IMR-90 (cell line): ENCODE measurements at regions of chr7 and their contacts with region 1.

Region 1: DNA sequence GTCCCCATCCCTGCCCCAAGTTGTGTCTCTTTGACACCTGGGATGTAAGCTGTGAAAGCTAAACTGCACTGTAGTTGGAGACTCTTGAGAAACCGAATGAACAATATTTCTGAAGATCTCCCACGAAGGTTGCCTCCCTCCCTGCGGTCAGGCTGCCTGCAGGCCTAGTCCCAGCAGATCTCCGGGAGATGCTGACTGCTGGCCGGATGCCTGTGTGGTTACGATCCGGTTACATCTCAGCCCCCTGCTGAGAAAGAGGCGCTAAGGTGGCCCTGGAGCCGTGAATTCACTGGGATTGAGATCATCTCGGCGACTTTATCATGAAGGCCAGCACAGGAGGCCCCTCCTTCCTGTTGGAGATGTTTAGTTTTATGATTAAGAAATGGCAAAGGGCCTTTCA is 177.8 kb downstream of the PRKAG2 start:
- DNase-seq: peak; percentile 97
- ATAC-seq: peak; percentile 96
- H3K4me3 ChIP-seq: no peak overlapping the region
- H3K27ac ChIP-seq: no peak overlapping the region
- H3K4me1 ChIP-seq: peaks cover 12% of the 10 kb centered on the region
- H3K27me3 ChIP-seq: no peaks in the 10 kb centered on the region
- CTCF ChIP-seq: peak; percentile 11; the same call in 1 of the 2 replicates
- POLR2A ChIP-seq: no peak
- RAD21 ChIP-seq: peak; percentile 30

Region 2: DNA sequence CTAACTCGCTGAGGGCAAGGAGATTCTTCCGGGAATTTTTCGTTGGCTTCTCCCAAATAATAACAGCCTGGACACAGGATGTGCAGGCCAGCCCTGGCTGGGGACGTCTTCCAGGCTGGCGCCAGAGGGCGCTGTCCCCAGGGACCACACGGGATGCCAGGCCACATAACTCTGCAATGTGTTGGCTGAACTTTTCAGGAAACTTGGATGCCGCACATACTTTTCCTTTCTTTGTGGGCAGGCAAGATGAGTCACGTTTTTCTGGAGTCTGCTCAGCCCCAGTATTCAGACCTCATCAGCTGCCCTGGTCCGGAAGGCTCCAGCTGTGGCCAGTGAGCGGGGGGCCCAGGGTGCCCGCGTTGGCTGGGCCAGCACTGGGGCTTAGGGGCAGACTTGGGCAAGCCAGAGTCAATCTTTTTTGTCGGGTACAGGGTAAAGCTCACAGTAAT is 55.0 kb after region 1 on chr7:
- CTCF ChIA-PET with region 1: no interaction called
- POLR2A ChIA-PET with region 1: no interaction called
- dilution Hi-C with region 1: no loop called
- in situ Hi-C with region 1: no loop called
- intact Hi-C with region 1: loop called (anchors 2 kb)
- DNase-seq: peak; percentile 99
- ATAC-seq: peak; percentile 85
- H3K4me3 ChIP-seq: no peak overlapping the region
- H3K27ac ChIP-seq: peak overlapping the region; percentile 91
- H3K4me1 ChIP-seq: peaks cover 36% of the 10 kb centered on the region
- H3K27me3 ChIP-seq: no peaks in the 10 kb centered on the region
- CTCF ChIP-seq: peak; percentile 99
- POLR2A ChIP-seq: no peak
- RAD21 ChIP-seq: peak; percentile 74